ENCODE measurements at regions of chr18 and their contacts with region 1.

Region 1: DNA sequence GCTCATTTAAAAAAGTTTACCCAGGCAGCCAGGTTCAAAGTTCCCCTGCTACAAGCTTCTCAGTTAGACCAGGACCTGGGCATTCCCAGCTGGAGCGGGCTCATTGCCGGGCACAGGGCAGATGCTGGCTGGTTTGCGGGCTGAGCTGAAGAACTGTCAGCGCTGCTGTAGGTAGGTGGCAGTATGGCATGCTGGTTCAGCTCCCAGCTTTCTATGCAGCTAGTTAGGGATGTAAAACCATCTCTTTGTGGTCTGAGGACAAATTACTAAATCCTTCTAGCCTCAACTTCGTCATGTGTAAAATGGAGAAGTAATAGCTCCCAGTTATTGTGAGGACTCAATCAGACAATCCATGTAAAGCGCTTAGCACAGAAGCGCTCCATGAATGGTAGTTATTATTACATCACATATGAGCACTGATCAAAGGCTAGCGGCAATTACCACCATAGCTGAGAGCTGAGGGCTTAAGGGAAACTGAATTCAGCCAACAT is 2.4 kb upstream of the LDLRAD4 start:
- DNase-seq: peak; percentile 78
- H3K4me3 Mint-ChIP-seq: peak overlapping the region; percentile 68
- H3K27ac Mint-ChIP-seq: no peak overlapping the region
- H3K4me1 Mint-ChIP-seq: peaks cover 29% of the 10 kb centered on the region
- H3K27me3 Mint-ChIP-seq: peaks cover 22% of the 10 kb centered on the region

Region 2: GRCh38 chr18:13159579-13159978 is 56.6 kb before region 1 on chr18:
- CTCF ChIA-PET with region 1: interaction called, 11 read pairs
- intact Hi-C with region 1: no loop called
- DNase-seq: peak; percentile 34
- H3K4me3 Mint-ChIP-seq: no peak overlapping the region
- H3K27ac Mint-ChIP-seq: no peak overlapping the region
- H3K4me1 Mint-ChIP-seq: peaks cover 3% of the 10 kb centered on the region
- H3K27me3 Mint-ChIP-seq: no peaks in the 10 kb centered on the region

Region 3: DNA sequence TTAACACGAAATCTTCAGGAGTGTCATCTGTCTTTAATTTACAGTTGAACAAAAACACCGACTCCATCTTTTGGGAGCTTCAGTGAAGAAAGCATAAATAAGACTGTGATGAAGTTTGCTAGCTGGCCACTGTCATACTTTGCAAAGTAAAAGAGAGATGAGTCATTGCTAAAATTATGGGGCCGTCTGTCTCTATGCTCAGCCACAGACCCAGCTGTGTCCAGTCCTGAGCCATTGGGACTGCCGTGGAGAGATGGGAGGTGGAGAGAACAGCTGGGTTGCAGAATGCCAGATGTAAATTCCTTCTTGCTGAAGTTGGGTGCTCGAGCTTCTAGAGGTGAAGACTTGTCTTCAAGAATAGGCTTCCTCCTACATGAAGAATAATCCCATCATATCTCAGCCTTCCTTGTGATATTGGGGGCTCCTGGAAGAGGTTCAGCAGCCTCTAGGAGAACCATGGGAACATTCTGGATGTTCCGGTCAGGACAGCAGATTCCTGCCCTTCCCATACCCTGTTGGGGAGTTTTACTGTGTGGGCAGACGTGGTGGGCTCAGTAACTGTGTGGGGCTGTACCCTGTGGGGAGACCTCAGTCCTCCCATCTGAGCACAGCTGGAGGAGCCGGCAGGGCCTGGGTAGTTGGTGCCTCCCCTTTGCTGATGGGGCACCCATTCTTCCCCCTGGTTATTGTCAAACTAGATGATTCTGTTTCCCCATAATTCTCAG is 73.5 kb after region 1 on chr18:
- CTCF ChIA-PET with region 1: interaction called, 3 read pairs
- intact Hi-C with region 1: loop called (anchors 2 kb)
- DNase-seq: no peak
- H3K4me3 Mint-ChIP-seq: no peak overlapping the region
- H3K27ac Mint-ChIP-seq: no peak overlapping the region
- H3K4me1 Mint-ChIP-seq: peaks cover 24% of the 10 kb centered on the region
- H3K27me3 Mint-ChIP-seq: no peaks in the 10 kb centered on the region

Region 4: GRCh38 chr18:13381944-13382365 is 165.8 kb after region 1 on chr18:
- CTCF ChIA-PET with region 1: interaction called, 27 read pairs
- intact Hi-C with region 1: loop called (anchors 1 kb)
- DNase-seq: peak; percentile 54
- H3K4me3 Mint-ChIP-seq: peak overlapping the region; percentile 71
- H3K27ac Mint-ChIP-seq: peak overlapping the region; percentile 94
- H3K4me1 Mint-ChIP-seq: peaks cover 72% of the 10 kb centered on the region
- H3K27me3 Mint-ChIP-seq: no peaks in the 10 kb centered on the region

Region 5: GRCh38 chr18:13525381-13526029 is 309.4 kb after region 1 on chr18:
- CTCF ChIA-PET with region 1: interaction called, 15 read pairs
- intact Hi-C with region 1: loop called (anchors 2 kb)
- DNase-seq: no peak
- H3K4me3 Mint-ChIP-seq: no peak overlapping the region
- H3K27ac Mint-ChIP-seq: no peak overlapping the region
- H3K4me1 Mint-ChIP-seq: peaks cover 16% of the 10 kb centered on the region
- H3K27me3 Mint-ChIP-seq: no peaks in the 10 kb centered on the region

Region 6: DNA sequence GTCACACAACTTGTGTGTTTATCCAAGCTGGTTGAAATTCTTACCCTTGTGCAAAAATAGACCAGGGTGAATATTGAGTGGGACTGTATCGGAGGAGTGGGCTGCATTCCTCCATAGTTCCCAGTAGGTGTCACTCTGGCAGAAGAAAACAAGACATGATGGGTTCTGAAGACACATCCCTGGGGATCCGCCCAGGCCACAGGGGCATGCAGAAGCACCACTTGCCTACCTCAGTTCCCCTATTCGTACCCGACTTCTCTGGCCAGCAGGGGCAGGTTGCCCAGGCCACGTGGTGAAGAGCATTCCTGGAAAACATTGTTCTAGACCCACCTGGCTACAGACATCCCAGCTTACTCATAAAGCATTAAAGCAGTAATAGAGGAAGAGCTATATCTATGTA is 342.0 kb after region 1 on chr18:
- CTCF ChIA-PET with region 1: interaction called, 13 read pairs
- intact Hi-C with region 1: loop called (anchors 2 kb)
- DNase-seq: peak; percentile 48
- H3K4me3 Mint-ChIP-seq: no peak overlapping the region
- H3K27ac Mint-ChIP-seq: no peak overlapping the region
- H3K4me1 Mint-ChIP-seq: peaks cover 32% of the 10 kb centered on the region
- H3K27me3 Mint-ChIP-seq: no peaks in the 10 kb centered on the region

Region 7: GRCh38 chr18:13726232-13726971 is 510.3 kb after region 1 on chr18 and contains the starts of genes FAM210A and RNMT:
- CTCF ChIA-PET with region 1: interaction called, 3 read pairs
- intact Hi-C with region 1: loop called (anchors 1 kb)
- DNase-seq: peak; percentile 96
- H3K4me3 Mint-ChIP-seq: peak within 1 kb of the TSS; percentile 91
- H3K27ac Mint-ChIP-seq: peak within 1 kb of the TSS; percentile 89
- H3K4me1 Mint-ChIP-seq: peaks cover 46% of the 10 kb centered on the region
- H3K27me3 Mint-ChIP-seq: no peaks in the 10 kb centered on the region
- total RNA-seq, gene FAM210A: 18.6 to 20.2 TPM
- total RNA-seq, gene RNMT: 25.2 to 27.4 TPM

Measured in activated naive CD4-positive, alpha-beta T cell treated with anti-CD3 and anti-CD28 coated beads for 36 hours (primary cell).